Activated CD4-positive, alpha-beta T cell treated with anti-CD3 and anti-CD28 coated beads for 36 hours (primary cell): ENCODE measurements at regions of chr11 and their contacts with region 1.

Region 1: DNA sequence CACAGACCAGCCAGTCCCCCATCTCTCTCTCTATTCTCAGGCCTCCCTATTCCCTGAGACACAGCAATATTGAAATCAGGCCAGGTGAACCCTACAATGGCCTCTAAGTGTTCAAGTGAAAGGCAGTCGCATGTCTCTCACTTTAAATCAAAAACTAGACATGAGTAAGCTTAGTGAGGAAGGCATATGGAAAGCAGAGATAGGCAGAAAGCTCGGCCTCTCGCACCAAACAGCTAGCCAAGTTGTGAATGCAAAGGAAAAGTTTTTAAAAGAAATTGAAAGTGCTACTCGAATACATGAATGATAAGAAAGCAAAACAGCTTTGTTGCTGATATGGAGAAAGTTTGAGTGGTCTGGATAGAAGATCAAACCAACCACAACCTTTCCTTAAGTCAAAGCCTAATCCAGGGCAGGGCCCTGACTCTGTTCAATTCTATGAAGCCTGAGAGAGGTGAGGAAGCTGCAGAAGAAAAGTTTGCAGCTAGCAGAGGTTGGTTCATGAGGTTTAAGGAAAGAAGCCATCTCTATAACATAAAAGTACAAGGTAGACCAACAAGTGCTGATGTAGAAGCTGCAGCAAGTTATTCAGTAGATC is 19.8 kb upstream of the MPZL2 start:
- DNase-seq: peak; percentile 53
- ATAC-seq: peak; percentile 78
- H3K4me3 Mint-ChIP-seq: no peak overlapping the region
- H3K27ac Mint-ChIP-seq: peak overlapping the region; percentile 69
- H3K4me1 Mint-ChIP-seq: peaks cover 52% of the 10 kb centered on the region
- H3K27me3 Mint-ChIP-seq: no peaks in the 10 kb centered on the region

Region 2: GRCh38 chr11:118258410-118258809 is 25.4 kb before region 1 on chr11:
- CTCF ChIA-PET with region 1: interaction called, 10 read pairs
- POLR2A ChIA-PET with region 1: no interaction called
- intact Hi-C with region 1: no loop called
- DNase-seq: peak; percentile 33
- ATAC-seq: peak; percentile 70
- H3K4me3 Mint-ChIP-seq: no peak overlapping the region
- H3K27ac Mint-ChIP-seq: no peak overlapping the region
- H3K4me1 Mint-ChIP-seq: peaks cover 42% of the 10 kb centered on the region
- H3K27me3 Mint-ChIP-seq: no peaks in the 10 kb centered on the region

Region 3: GRCh38 chr11:119134389-119134978 is 850.6 kb after region 1 on chr11:
- CTCF ChIA-PET with region 1: no interaction called
- POLR2A ChIA-PET with region 1: no interaction called
- intact Hi-C with region 1: no loop called
- DNase-seq: peak; percentile 37
- ATAC-seq: peak; percentile 60
- H3K4me3 Mint-ChIP-seq: no peak overlapping the region
- H3K27ac Mint-ChIP-seq: no peak overlapping the region
- H3K4me1 Mint-ChIP-seq: peaks cover 2% of the 10 kb centered on the region
- H3K27me3 Mint-ChIP-seq: peaks cover 6% of the 10 kb centered on the region